ENCODE measurements at regions of chr2 and their contacts with region 1.

Region 1: GRCh38 chr2:86135653-86136052 is 29.6 kb downstream of the PTCD3 start:
- DNase-seq: no peak
- H3K4me3 ChIP-seq: no peak overlapping the region
- H3K4me3 Mint-ChIP-seq: no peak overlapping the region
- H3K27ac ChIP-seq: no peak overlapping the region
- H3K27ac Mint-ChIP-seq: peak overlapping the region in 1 of 8 donors; percentile 13
- H3K4me1 ChIP-seq: no peaks in the 10 kb centered on the region
- H3K4me1 Mint-ChIP-seq: peaks cover 9 to 15% (median 14%) of the 10 kb centered on the region in 3 donors
- H3K27me3 ChIP-seq: no peaks in the 10 kb centered on the region
- H3K27me3 Mint-ChIP-seq: peaks cover 0 to 1% of the 10 kb centered on the region in 2 donors

Region 2: GRCh38 chr2:88054800-88055370 is 1919.2 kb after region 1 on chr2:
- CTCF ChIA-PET with region 1: no interaction called
- POLR2A ChIA-PET with region 1: interaction called, 11 read pairs
- DNase-seq: peak in 1 of 5 donors; percentile 17
- H3K4me3 ChIP-seq: peak overlapping the region; percentile 65
- H3K4me3 Mint-ChIP-seq: peak overlapping the region; percentile 88 to 99 (median 96)
- H3K27ac ChIP-seq: peak overlapping the region; percentile 78
- H3K27ac Mint-ChIP-seq: peak overlapping the region; percentile 92 to 100 (median 98)
- H3K4me1 ChIP-seq: peaks cover 28% of the 10 kb centered on the region
- H3K4me1 Mint-ChIP-seq: peaks cover 38 to 50% (median 49%) of the 10 kb centered on the region in 3 donors
- H3K27me3 ChIP-seq: no peaks in the 10 kb centered on the region
- H3K27me3 Mint-ChIP-seq: peaks cover 0 to 2% of the 10 kb centered on the region in 2 donors